ENCODE measurements at regions of chr2 and their contacts with region 1.

Region 1: DNA sequence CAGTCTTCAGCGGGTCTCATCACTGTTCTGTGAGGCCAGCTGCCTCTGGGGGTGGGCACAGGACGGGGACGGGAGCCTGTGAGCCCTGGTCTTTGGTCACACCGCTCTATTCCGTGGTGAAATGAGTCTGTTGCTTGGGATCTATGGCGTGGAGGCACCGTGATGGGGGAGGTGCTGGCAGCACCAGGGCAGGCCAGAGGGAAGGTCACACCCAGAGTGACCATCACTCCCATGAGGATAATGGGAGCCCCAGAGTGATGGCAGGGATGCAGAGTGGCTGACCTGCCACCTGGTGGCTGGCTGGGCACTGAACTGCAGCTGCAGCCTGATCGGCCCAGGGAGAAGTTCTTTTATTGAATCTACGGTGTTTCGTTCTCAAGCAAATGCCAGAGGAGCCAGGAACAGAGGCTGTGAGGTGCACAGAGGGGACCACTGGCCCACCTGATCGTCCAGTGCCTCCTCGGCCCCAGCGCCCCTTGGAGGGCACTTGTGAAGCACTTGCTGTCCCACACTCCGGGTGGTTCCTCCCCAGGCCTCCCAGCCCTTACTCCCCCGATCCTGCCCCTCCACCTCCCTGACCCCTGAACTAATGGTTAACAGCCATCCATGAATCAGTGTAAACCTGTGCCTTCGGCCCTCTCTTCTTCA is 17.9 kb downstream of the KCNIP3 start:
- DNase-seq: peak in 4 of 6 donors; percentile 42 to 81 (median 73)
- ATAC-seq: peak; percentile 76 to 93 (median 87)
- H3K4me3 ChIP-seq: no peak overlapping the region
- H3K27ac ChIP-seq: no peak overlapping the region
- H3K4me1 ChIP-seq: no peaks in the 10 kb centered on the region
- H3K27me3 ChIP-seq: no peaks in the 10 kb centered on the region
- CTCF ChIP-seq: peak; percentile 53 to 82 (median 68)

Region 2: GRCh38 chr2:94861308-94862152 is 453.6 kb before region 1 on chr2:
- intact Hi-C with region 1: no loop called
- DNase-seq: peak in 3 of 6 donors; percentile 7 to 67 (median 59)
- ATAC-seq: no peak
- H3K4me3 ChIP-seq: peak overlapping the region in 1 of 4 donors; percentile 14
- H3K27ac ChIP-seq: no peak overlapping the region
- H3K4me1 ChIP-seq: no peaks in the 10 kb centered on the region
- H3K27me3 ChIP-seq: peaks cover 0 to 3% (median 1%) of the 10 kb centered on the region in 4 donors
- CTCF ChIP-seq: no peak

Region 3: GRCh38 chr2:95203911-95204310 is 111.2 kb before region 1 on chr2:
- intact Hi-C with region 1: no loop called
- DNase-seq: no peak
- ATAC-seq: no peak
- H3K4me3 ChIP-seq: no peak overlapping the region
- H3K27ac ChIP-seq: no peak overlapping the region
- H3K4me1 ChIP-seq: peaks cover 0 to 5% (median 0%) of the 10 kb centered on the region in 3 donors
- H3K27me3 ChIP-seq: no peaks in the 10 kb centered on the region
- CTCF ChIP-seq: no peak

Region 4: DNA sequence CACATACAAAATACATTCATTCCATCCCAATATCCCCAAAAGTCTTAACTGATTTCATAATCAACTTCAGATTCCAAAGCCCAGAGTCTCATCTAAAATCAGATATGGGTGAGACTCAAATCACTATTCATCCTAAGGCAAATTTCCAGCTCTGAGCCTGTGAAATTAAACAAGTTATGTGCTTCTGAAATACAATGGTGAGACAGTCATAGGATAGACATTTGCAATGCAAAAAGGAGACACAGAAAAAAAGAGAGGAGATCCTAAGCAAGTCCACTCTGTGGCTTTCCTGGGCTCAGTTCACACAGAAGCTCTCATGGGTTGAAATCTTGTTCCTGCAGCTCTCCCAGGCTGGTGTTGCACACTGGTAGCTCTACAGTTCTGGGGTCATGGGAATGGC is 89.4 kb before region 1 on chr2:
- intact Hi-C with region 1: loop called in 2 of 3 experiments (anchors 5 kb)
- DNase-seq: no peak
- ATAC-seq: no peak
- H3K4me3 ChIP-seq: no peak overlapping the region
- H3K27ac ChIP-seq: no peak overlapping the region
- H3K4me1 ChIP-seq: no peaks in the 10 kb centered on the region
- H3K27me3 ChIP-seq: no peaks in the 10 kb centered on the region
- CTCF ChIP-seq: no peak

Region 5: GRCh38 chr2:95231723-95232122 is 83.4 kb before region 1 on chr2:
- intact Hi-C with region 1: loop called in 2 of 3 experiments (anchors 5 kb)
- DNase-seq: peak; percentile 46 to 87 (median 75)
- ATAC-seq: peak; percentile 60 to 91 (median 76)
- H3K4me3 ChIP-seq: no peak overlapping the region
- H3K27ac ChIP-seq: no peak overlapping the region
- H3K4me1 ChIP-seq: no peaks in the 10 kb centered on the region
- H3K27me3 ChIP-seq: no peaks in the 10 kb centered on the region
- CTCF ChIP-seq: peak; percentile 37 to 76 (median 68)

Region 6: DNA sequence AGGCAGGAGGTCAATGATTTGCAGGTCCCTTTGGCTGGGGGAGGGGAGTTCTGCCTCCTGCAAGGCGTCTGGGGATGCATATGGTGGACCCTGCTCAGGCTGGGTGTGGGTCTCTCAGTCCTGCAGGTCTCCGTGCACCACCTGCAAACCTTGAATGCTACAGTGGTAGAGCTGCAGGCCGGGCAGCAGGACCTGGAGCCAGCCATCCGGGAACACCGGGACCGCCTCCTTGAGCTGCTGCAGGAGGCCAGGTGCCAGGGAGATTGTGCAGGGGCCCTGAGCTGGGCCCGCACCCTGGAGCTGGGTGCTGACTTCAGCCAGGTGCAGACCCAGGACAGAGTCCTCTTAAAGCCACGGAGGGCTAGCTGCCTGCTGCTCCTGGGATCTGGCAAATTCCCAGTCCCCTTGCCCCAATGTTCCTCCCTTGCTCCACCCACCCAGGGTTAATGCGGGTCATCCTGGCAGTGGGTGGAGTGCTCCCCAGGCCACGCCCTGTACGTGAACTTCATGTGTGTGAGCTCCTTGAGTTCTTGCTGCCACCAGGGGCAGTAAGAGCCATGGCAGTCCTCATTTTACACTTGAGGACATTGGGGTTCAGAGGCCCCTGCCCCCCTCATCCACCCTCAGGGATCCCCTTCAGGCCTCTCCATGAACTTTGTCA is 37.7 kb before region 1 on chr2:
- intact Hi-C with region 1: loop called in 1 of 3 experiments (anchors 5 kb)
- DNase-seq: peak; percentile 63 to 78 (median 74)
- ATAC-seq: peak; percentile 45 to 72 (median 65)
- H3K4me3 ChIP-seq: no peak overlapping the region
- H3K27ac ChIP-seq: peak overlapping the region in 1 of 4 donors; percentile 30
- H3K4me1 ChIP-seq: peaks cover 10 to 30% (median 12%) of the 10 kb centered on the region in 3 donors
- H3K27me3 ChIP-seq: no peaks in the 10 kb centered on the region
- CTCF ChIP-seq: peak in 1 of 4 donors; percentile 11

Region 7: DNA sequence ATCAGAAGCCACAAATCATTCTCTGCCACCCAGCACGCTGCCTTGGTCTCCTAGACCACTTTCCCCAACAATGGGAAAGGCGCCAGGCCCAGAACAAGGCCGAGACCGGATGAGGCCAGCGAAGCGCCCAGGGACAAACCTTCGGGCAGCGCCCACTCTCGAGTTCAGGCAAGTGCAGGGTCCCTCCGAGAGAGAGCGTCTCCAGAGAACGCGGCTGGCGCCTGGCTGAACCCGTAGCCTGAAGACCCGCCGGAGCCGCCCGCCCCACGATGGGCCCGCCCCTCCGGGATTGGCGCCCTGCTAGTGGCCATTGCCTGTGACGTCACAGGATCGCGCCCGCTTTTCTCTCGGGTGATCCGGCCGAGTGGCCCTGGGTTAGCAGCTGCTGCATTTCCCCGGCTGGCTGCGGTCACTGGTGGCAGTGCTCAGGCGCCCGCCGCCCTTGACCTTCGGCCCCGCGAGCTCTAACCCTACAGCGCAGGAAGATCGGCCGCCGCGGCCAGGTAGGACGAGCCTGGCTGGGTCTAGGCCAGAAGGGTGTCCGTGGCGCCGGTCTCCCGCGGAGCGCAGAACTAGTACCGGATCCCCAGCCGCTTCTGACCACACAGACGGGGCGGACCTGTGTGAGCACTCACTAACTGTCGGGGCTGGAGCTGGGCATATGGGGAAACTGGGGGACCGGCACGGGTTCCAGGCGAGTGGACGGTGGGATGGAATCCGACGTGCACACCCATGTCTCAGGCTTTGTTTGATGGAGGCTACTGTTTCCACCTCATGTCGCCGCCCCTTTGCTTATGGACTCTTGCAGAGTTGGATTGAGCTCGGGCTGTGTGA is 87.5 kb after region 1 on chr2 and contains the start of gene FAHD2A:
- intact Hi-C with region 1: no loop called
- DNase-seq: peak; percentile 96 to 99 (median 98)
- ATAC-seq: peak; percentile 96 to 99 (median 98)
- H3K4me3 ChIP-seq: peak within 1 kb of the TSS; percentile 50 to 93 (median 88)
- H3K27ac ChIP-seq: peak within 1 kb of the TSS; percentile 74 to 90 (median 89)
- H3K4me1 ChIP-seq: peaks cover 0 to 7% (median 0%) of the 10 kb centered on the region in 3 donors
- H3K27me3 ChIP-seq: no peaks in the 10 kb centered on the region
- CTCF ChIP-seq: no peak
- total RNA-seq, gene FAHD2A: 15.4 to 22.2 (median 17.9) TPM

Region 8: DNA sequence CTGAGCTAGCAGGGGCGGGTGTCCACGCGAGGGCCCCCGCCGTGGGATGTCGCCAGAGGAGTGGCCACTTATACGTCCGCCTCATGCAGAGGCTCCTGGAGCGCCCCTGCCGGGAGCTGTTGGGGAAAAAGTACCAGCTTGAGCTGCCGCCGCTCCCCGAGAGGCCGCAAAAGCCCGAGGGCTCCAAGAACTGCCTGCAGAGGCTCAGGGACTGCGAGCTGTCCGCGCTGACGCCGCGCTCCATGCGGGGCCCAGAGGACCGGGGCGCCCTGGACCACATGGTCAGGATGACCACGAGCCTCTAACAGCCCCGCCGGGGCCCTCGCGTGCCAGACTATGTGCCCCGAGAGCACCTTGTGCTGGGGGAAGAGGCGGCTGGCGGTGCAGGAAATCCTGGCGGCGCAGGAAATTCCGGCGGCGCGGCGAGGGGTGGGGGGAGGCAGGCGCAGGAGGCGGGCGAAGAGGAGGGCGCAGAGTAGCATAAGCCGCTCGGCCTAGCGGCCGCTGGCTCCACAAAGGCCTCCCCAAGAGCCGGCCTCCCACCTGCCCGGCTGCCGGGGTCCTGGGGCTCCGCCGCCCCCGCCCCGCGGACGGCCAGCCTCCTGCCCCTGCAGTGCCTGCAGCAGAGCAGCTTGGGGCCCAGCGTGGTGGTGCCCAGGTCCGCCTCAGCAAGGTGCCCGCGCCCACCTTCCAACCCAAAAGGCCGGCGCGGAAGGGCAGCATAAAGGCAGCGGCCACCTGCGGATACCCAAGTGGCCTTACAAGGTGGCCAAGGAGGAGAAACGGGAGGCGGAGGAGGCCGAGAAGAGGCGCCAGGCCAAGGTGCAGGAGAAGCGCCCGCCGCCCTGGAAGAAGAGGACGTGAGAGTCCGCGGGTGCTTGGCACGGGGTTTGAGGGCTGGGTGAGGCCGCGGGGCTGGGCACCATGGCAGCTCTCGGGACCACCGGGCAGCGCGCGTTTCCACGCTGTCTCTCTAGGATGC is 211.6 kb after region 1 on chr2:
- intact Hi-C with region 1: no loop called
- DNase-seq: peak; percentile 64 to 91 (median 75)
- ATAC-seq: peak; percentile 91 to 98 (median 96)
- H3K4me3 ChIP-seq: peak overlapping the region; percentile 69 to 91 (median 84)
- H3K27ac ChIP-seq: peak overlapping the region; percentile 67 to 87 (median 82)
- H3K4me1 ChIP-seq: peaks cover 0 to 9% (median 0%) of the 10 kb centered on the region in 3 donors
- H3K27me3 ChIP-seq: no peaks in the 10 kb centered on the region
- CTCF ChIP-seq: peak in 2 of 4 donors; percentile 15 to 29